A673 (cell line): ENCODE measurements at regions of chr7 and their contacts with region 1.

Region 1: GRCh38 chr7:74334030-74334429 is 44.8 kb downstream of the CLIP2 start:
- DNase-seq: no peak
- H3K4me3 ChIP-seq: no peak overlapping the region
- H3K27ac ChIP-seq: no peak overlapping the region
- H3K4me1 ChIP-seq: no peaks in the 10 kb centered on the region
- H3K27me3 ChIP-seq: no peaks in the 10 kb centered on the region
- CTCF ChIP-seq: no peak

Region 2: GRCh38 chr7:74217455-74218342 is 116.3 kb before region 1 on chr7:
- CTCF ChIA-PET with region 1: interaction called, 17 read pairs
- POLR2A ChIA-PET with region 1: no interaction called
- intact Hi-C with region 1: no loop called
- DNase-seq: no peak
- H3K4me3 ChIP-seq: no peak overlapping the region
- H3K27ac ChIP-seq: no peak overlapping the region
- H3K4me1 ChIP-seq: no peaks in the 10 kb centered on the region
- H3K27me3 ChIP-seq: no peaks in the 10 kb centered on the region
- CTCF ChIP-seq: no peak